ENCODE measurements at regions of chr1 and their contacts with region 1.

Region 1: DNA sequence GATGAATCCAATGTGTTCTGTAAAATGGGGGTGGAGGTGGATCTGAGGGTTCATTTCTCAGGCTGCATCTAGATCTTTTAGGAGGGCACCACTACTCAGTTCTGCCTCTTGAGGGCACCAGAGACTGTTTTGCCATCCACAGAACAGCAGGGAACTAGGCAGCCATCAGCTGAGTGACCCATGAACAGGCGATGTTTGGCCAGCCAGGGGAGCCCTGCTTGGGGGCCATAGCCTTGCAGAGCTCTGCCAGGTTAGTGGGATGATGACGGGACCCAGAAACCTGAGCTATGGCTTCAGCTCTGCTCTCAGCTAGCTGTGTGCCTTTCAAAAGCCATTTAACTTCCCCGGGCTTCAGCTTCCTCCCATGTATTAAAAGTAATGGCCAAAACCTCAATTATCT is 13.4 kb upstream of the NOS1AP start:
- DNase-seq: peak; percentile 79
- H3K4me3 ChIP-seq: no peak overlapping the region
- H3K27ac ChIP-seq: no peak overlapping the region
- H3K4me1 ChIP-seq: no peaks in the 10 kb centered on the region
- H3K27me3 ChIP-seq: no peaks in the 10 kb centered on the region
- CTCF ChIP-seq: peak; percentile 62 to 81 (median 79)
- POLR2A ChIP-seq: no peak

Region 2: GRCh38 chr1:161946071-161946987 is 109.7 kb before region 1 on chr1:
- intact Hi-C with region 1: no loop called
- DNase-seq: no peak
- H3K4me3 ChIP-seq: no peak overlapping the region
- H3K27ac ChIP-seq: no peak overlapping the region
- H3K4me1 ChIP-seq: no peaks in the 10 kb centered on the region
- H3K27me3 ChIP-seq: no peaks in the 10 kb centered on the region
- CTCF ChIP-seq: no peak
- POLR2A ChIP-seq: no peak

Region 3: GRCh38 chr1:162335126-162335525 is 279.1 kb after region 1 on chr1:
- intact Hi-C with region 1: no loop called
- DNase-seq: no peak
- H3K4me3 ChIP-seq: no peak overlapping the region
- H3K27ac ChIP-seq: no peak overlapping the region
- H3K4me1 ChIP-seq: no peaks in the 10 kb centered on the region
- H3K27me3 ChIP-seq: no peaks in the 10 kb centered on the region
- CTCF ChIP-seq: no peak
- POLR2A ChIP-seq: no peak

Region 4: GRCh38 chr1:162391790-162392563 is 335.9 kb after region 1 on chr1:
- intact Hi-C with region 1: loop called (anchors 5 kb)
- DNase-seq: peak; percentile 36
- H3K4me3 ChIP-seq: no peak overlapping the region
- H3K27ac ChIP-seq: no peak overlapping the region
- H3K4me1 ChIP-seq: peaks cover 11% of the 10 kb centered on the region
- H3K27me3 ChIP-seq: no peaks in the 10 kb centered on the region
- CTCF ChIP-seq: peak; percentile 58 to 91 (median 82)
- POLR2A ChIP-seq: no peak